IMR-90 (cell line): ENCODE measurements at regions of chrX and their contacts with region 1.

Region 1: GRCh38 chrX:9456250-9457074 is 8.4 kb upstream of the TBL1X start:
- DNase-seq: no peak
- ATAC-seq: no peak
- H3K4me3 ChIP-seq: no peak overlapping the region
- H3K27ac ChIP-seq: no peak overlapping the region
- H3K4me1 ChIP-seq: no peaks in the 10 kb centered on the region
- H3K27me3 ChIP-seq: no peaks in the 10 kb centered on the region
- CTCF ChIP-seq: no peak
- POLR2A ChIP-seq: no peak
- RAD21 ChIP-seq: no peak

Region 2: GRCh38 chrX:9352694-9353411 is 103.6 kb before region 1 on chrX:
- CTCF ChIA-PET with region 1: no interaction called
- POLR2A ChIA-PET with region 1: no interaction called
- dilution Hi-C with region 1: no loop called
- in situ Hi-C with region 1: loop called (anchors 10 kb)
- intact Hi-C with region 1: no loop called
- DNase-seq: peak; percentile 75
- ATAC-seq: peak; percentile 64
- H3K4me3 ChIP-seq: no peak overlapping the region
- H3K27ac ChIP-seq: peak overlapping the region; percentile 42
- H3K4me1 ChIP-seq: peaks cover 18% of the 10 kb centered on the region
- H3K27me3 ChIP-seq: no peaks in the 10 kb centered on the region
- CTCF ChIP-seq: no peak
- POLR2A ChIP-seq: no peak
- RAD21 ChIP-seq: no peak

Region 3: DNA sequence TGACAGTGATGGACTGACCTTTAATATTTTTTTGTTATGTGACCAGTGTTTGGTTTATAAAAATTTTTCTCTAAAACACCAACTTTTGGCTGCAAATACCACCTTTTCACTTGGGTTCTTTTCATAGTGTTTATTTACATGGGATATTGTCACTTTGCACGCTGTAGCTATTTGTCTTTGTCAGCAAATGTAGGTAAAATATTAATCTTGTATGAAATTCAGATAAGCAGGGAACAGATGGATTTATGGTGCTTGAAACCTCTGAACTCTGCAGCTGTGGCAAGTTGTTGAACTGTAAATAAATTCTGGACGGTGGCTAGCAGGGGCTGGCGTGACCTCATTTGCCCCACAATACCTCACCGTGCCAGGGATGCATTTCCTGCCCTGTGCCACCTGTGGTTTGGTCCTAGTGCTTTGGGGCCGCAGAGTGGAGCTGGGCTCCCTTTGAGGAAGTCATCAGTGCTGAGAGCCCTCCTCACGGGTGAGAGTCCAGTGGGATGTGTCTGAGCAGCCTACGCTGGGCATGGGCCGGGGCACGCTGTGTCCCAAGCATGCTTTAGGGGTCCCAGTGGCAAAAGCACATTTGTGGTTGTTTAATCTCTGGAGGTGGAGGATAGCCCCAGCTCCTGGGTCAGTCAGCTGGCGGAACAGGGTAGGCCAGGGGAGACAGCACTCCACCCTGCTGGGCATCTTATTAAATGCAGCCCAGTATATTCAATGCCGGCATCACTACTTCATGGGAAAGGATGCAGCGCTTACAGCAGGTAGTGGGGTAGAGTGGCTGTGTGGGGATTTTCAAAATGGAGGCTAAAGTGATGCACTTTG is 117.0 kb after region 1 on chrX:
- CTCF ChIA-PET with region 1: no interaction called
- POLR2A ChIA-PET with region 1: no interaction called
- dilution Hi-C with region 1: no loop called
- in situ Hi-C with region 1: no loop called
- intact Hi-C with region 1: no loop called
- DNase-seq: no peak
- ATAC-seq: no peak
- H3K4me3 ChIP-seq: no peak overlapping the region
- H3K27ac ChIP-seq: no peak overlapping the region
- H3K4me1 ChIP-seq: peaks cover 3% of the 10 kb centered on the region
- H3K27me3 ChIP-seq: no peaks in the 10 kb centered on the region
- CTCF ChIP-seq: no peak
- POLR2A ChIP-seq: no peak
- RAD21 ChIP-seq: no peak